ENCODE measurements at regions of chr6 and their contacts with region 1.

Region 1: GRCh38 chr6:25404693-25405169 is 125.6 kb downstream of the CARMIL1 start:
- DNase-seq: peak; percentile 46
- ATAC-seq: peak; percentile 91
- H3K4me3 Mint-ChIP-seq: no peak overlapping the region
- H3K27ac Mint-ChIP-seq: no peak overlapping the region
- H3K4me1 Mint-ChIP-seq: peaks cover 15% of the 10 kb centered on the region
- H3K27me3 Mint-ChIP-seq: no peaks in the 10 kb centered on the region
- CTCF ChIP-seq: no peak

Region 2: GRCh38 chr6:25369433-25370181 is 35.1 kb before region 1 on chr6:
- CTCF ChIA-PET with region 1: no interaction called
- POLR2A ChIA-PET with region 1: interaction called, 5 read pairs
- intact Hi-C with region 1: loop called (anchors 2 kb)
- DNase-seq: no peak
- ATAC-seq: no peak
- H3K4me3 Mint-ChIP-seq: no peak overlapping the region
- H3K27ac Mint-ChIP-seq: peak overlapping the region; percentile 22
- H3K4me1 Mint-ChIP-seq: peaks cover 70% of the 10 kb centered on the region
- H3K27me3 Mint-ChIP-seq: no peaks in the 10 kb centered on the region
- CTCF ChIP-seq: no peak

Region 3: DNA sequence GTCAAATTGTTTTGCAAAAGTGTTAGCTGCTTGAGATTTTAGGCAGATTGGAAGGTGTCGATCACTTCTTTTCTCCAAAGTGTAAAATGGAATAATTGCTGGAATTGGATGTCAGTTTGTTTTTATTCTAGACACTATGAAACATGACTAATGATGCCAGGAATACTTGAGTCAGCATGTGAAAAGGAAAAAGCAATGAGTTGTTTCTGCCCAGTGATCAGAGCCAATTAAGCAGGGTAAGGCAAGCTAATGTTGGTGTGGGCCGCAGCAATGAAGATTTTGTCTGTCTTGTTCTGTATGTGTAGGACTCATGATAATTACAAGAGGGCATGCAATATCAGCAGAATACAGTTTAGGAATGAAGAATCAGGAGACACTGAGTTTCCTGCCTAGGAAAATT is 15.3 kb before region 1 on chr6:
- CTCF ChIA-PET with region 1: no interaction called
- POLR2A ChIA-PET with region 1: interaction called, 9 read pairs
- intact Hi-C with region 1: loop called (anchors 1 kb)
- DNase-seq: no peak
- ATAC-seq: no peak
- H3K4me3 Mint-ChIP-seq: no peak overlapping the region
- H3K27ac Mint-ChIP-seq: no peak overlapping the region
- H3K4me1 Mint-ChIP-seq: peaks cover 31% of the 10 kb centered on the region
- H3K27me3 Mint-ChIP-seq: no peaks in the 10 kb centered on the region
- CTCF ChIP-seq: no peak

Region 4: GRCh38 chr6:25756382-25757363 is 351.9 kb after region 1 on chr6:
- CTCF ChIA-PET with region 1: no interaction called
- POLR2A ChIA-PET with region 1: no interaction called
- intact Hi-C with region 1: no loop called
- DNase-seq: no peak
- ATAC-seq: no peak
- H3K4me3 Mint-ChIP-seq: no peak overlapping the region
- H3K27ac Mint-ChIP-seq: no peak overlapping the region
- H3K4me1 Mint-ChIP-seq: no peaks in the 10 kb centered on the region
- H3K27me3 Mint-ChIP-seq: peaks cover 6% of the 10 kb centered on the region
- CTCF ChIP-seq: no peak

Measured in activated B cell treated with CpG ODN at 0.5 μM for 24 hours (primary cell).